ENCODE measurements at regions of chr12 and their contacts with region 1.

Region 1: DNA sequence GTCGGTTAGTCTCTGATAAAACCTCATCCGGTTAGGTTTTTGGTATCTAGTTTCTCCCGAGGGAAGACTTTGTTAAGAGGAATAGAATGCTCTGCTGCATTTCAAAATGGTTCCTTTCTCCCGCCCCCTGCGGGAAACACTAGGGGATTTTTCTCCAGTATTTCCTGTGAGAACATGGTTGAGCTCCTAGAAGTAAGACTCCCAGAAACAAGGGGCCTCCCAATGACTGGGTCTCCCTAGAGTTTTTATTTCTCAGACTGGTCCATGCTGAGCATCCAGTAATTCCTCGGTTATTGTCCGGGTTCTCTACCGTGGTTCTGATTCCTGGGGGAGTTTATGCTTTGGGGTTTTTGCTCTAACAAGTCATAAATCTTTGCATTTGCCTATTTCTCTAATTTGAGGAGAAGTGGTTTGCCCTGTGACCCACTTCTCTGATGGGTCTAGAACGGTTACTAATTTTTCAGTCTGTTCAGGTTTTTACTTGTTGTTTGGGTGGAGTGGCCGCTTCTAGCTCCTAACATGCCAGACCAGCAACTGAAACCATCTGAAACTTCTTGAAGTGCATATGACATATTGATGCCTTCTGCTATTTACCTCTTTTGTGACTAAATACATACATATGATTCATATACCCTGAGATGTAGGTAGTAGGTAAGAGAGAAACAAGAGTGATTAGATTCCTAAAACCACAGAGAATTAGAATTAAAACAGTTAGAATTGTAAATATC is 25.1 kb downstream of the TESPA1 start:
- DNase-seq: no peak
- H3K4me3 ChIP-seq: no peak overlapping the region
- H3K27ac ChIP-seq: no peak overlapping the region
- H3K4me1 ChIP-seq: no peaks in the 10 kb centered on the region
- H3K27me3 ChIP-seq: peaks cover 0 to 4% of the 10 kb centered on the region in 2 donors
- CTCF ChIP-seq: no peak

Region 2: DNA sequence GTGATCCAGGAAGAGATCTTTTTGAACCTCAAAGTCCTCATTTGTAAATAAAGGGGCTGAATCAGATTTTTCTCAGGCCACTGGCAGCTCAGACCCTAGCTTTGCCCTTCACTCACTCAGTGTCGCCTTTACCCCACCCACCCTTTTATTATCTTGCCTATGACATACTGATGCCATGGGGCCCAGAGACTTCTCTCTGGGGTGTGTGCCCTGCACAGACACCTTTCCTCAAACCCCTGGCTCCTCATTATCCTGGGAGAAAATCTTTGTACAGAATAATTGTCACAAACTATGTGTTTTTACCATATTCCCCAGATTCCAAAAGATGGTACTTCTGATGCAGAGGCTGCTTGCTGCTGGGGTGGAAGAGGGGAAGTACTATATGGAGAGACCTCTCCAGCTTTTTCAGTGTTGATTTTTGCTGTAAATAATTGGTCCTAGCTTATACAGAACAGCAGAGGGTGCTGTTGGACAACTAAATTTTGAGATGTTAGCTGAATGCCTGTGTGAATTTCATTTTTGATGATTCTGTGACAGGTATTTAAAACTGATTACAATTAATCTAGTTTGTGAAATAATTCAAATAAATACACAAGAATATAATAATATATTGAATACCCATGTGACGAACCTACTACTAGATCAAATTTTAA is 257.4 kb before region 1 on chr12:
- intact Hi-C with region 1: loop called (anchors 10 kb)
- DNase-seq: no peak
- H3K4me3 ChIP-seq: no peak overlapping the region
- H3K27ac ChIP-seq: no peak overlapping the region
- H3K4me1 ChIP-seq: no peaks in the 10 kb centered on the region
- H3K27me3 ChIP-seq: no peaks in the 10 kb centered on the region
- CTCF ChIP-seq: peak; percentile 44 to 53

Region 3: DNA sequence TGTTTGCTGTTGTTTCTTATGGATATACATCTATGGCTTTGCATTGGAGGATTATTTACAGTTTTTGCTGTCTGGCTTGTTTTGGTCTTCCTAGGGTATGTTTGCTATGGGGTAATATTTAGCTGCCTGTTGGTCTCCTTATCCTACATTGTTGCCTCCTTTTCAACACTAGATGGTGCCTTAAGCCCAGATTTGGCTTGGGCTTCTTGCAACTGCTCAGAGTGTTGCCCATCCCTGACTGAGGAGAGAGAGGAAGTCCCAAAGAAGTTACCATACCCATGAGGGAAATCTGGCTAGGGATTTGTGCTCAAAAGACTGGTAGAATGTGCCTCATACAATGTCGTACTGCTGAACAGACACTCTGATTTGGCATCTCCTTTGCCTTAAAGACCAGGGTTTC is 199.7 kb before region 1 on chr12:
- intact Hi-C with region 1: loop called (anchors 10 kb)
- DNase-seq: no peak
- H3K4me3 ChIP-seq: no peak overlapping the region
- H3K27ac ChIP-seq: no peak overlapping the region
- H3K4me1 ChIP-seq: no peaks in the 10 kb centered on the region
- H3K27me3 ChIP-seq: no peaks in the 10 kb centered on the region
- CTCF ChIP-seq: no peak

Region 4: DNA sequence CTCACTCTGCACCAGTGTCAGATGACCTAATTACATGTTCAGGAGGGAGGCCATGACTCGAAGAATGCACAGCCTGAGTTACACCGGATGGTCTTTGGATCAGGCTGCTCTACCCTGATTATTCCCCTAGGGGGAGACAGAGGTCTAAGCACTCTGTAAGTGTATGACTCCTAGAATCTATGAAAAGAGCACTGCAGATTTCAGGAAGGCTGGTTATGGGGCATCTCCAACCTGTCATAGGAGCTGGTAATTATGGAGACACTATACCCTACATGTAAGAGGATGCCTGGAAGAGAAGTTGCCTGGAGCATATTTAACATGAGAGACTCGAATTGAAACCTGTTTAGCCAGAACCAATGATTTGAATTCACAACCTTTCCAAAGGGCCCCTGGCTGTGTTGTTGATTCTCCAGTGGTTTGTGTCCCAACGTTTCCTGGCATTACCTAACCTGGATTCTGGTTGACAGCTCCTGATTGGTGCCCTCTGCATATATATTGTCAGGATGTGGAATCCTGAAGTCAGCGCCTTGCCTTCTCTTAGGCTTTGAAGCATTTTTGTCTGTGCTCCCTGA is 105.4 kb before region 1 on chr12 and contains the start of gene MUCL1:
- intact Hi-C with region 1: no loop called
- DNase-seq: peak in 1 of 2 donors; percentile 29
- H3K4me3 ChIP-seq: no peak within 1 kb of the TSS
- H3K27ac ChIP-seq: no peak within 1 kb of the TSS
- H3K4me1 ChIP-seq: no peaks in the 10 kb centered on the region
- H3K27me3 ChIP-seq: no peaks in the 10 kb centered on the region
- CTCF ChIP-seq: peak; percentile 33 to 45

Region 5: DNA sequence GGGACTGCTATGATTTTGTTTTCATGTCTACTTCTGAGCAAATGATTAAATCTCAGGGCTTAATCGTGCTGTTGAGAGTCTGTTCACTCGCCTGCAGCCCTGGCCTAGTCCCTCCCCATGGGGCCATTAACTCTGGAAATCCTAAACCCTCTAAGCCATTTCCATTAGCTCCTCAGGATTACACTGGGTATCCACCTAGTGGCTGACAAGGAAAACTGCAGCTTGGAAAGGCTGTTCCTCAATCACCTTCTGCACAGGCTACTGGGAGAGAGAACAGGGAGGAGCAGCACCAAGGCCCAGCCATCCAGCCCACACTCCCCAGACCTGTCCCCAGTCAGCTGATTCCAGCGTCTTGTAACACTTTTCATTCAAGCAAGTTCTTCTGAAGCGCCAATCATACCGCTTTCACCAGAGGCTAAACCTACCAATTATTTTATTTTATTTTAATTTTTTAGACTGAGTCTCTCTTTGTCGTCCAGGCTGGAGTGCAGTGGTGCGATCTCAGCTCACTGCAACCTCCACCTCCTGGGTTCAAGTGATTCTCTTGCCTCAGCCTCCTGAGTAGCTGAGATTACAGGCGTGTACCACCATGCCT is 109.1 kb after region 1 on chr12:
- intact Hi-C with region 1: no loop called
- DNase-seq: no peak
- H3K4me3 ChIP-seq: no peak overlapping the region
- H3K27ac ChIP-seq: no peak overlapping the region
- H3K4me1 ChIP-seq: no peaks in the 10 kb centered on the region
- H3K27me3 ChIP-seq: peaks cover 0 to 15% of the 10 kb centered on the region in 2 donors
- CTCF ChIP-seq: peak; percentile 41 to 63